ENCODE measurements at regions of chr5 and their contacts with region 1.

Region 1: GRCh38 chr5:132820162-132820754 is 7.2 kb downstream of the SOWAHA start:
- DNase-seq: peak; percentile 60 to 86 (median 75)
- ATAC-seq: peak; percentile 93
- H3K4me3 ChIP-seq: peak overlapping the region; percentile 34
- H3K4me3 Mint-ChIP-seq: peak overlapping the region; percentile 5 to 86 (median 72)
- H3K27ac ChIP-seq: no peak overlapping the region
- H3K27ac Mint-ChIP-seq: peak overlapping the region in 2 of 9 donors; percentile 16 to 33
- H3K4me1 ChIP-seq: peaks cover 0 to 6% of the 10 kb centered on the region in 2 donors
- H3K4me1 Mint-ChIP-seq: peaks cover 6 to 18% (median 10%) of the 10 kb centered on the region in 7 donors
- H3K27me3 ChIP-seq: peaks cover 3 to 14% of the 10 kb centered on the region in 2 donors
- H3K27me3 Mint-ChIP-seq: peaks cover 13 to 51% (median 23%) of the 10 kb centered on the region in 5 donors

Region 2: GRCh38 chr5:130955041-130955440 is 1865.2 kb before region 1 on chr5:
- CTCF ChIA-PET with region 1: no interaction called
- POLR2A ChIA-PET with region 1: no interaction called
- intact Hi-C with region 1: no loop called
- DNase-seq: no peak
- ATAC-seq: no peak
- H3K4me3 ChIP-seq: no peak overlapping the region
- H3K4me3 Mint-ChIP-seq: no peak overlapping the region
- H3K27ac ChIP-seq: no peak overlapping the region
- H3K27ac Mint-ChIP-seq: no peak overlapping the region
- H3K4me1 ChIP-seq: no peaks in the 10 kb centered on the region
- H3K4me1 Mint-ChIP-seq: no peaks in the 10 kb centered on the region
- H3K27me3 ChIP-seq: no peaks in the 10 kb centered on the region
- H3K27me3 Mint-ChIP-seq: peaks cover 0 to 4% (median 0%) of the 10 kb centered on the region in 5 donors

Region 3: DNA sequence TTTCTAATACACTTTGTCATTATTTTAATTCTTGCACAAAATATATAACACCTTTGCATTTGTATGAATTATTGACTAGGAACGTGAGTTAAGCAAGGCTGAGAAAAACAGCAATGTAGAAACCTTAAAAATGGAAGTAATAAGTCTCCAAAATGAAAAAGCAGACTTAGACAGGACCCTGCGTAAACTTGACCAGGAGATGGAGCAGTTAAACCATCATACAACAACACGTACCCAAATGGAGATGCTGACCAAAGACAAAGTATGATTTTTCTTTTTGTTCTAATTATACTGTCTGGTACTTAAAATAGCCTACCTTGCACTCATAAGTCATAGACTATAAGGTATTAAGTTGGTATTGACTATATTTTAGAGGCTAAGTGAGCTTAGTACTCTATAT is 229.1 kb before region 1 on chr5:
- CTCF ChIA-PET with region 1: interaction called, 4 read pairs
- POLR2A ChIA-PET with region 1: no interaction called
- intact Hi-C with region 1: loop called (anchors 1 to 2 kb)
- DNase-seq: peak in 1 of 9 donors; percentile 1
- ATAC-seq: no peak
- H3K4me3 ChIP-seq: no peak overlapping the region
- H3K4me3 Mint-ChIP-seq: no peak overlapping the region
- H3K27ac ChIP-seq: no peak overlapping the region
- H3K27ac Mint-ChIP-seq: no peak overlapping the region
- H3K4me1 ChIP-seq: no peaks in the 10 kb centered on the region
- H3K4me1 Mint-ChIP-seq: peaks cover 0 to 18% (median 0%) of the 10 kb centered on the region in 7 donors
- H3K27me3 ChIP-seq: no peaks in the 10 kb centered on the region
- H3K27me3 Mint-ChIP-seq: no peaks in the 10 kb centered on the region